ENCODE measurements at regions of chr1 and their contacts with region 1.

Region 1: GRCh38 chr1:218865591-218865990 is 308.1 kb upstream of the LYPLAL1 start:
- DNase-seq: no peak
- H3K4me3 ChIP-seq: no peak overlapping the region
- H3K4me3 Mint-ChIP-seq: no peak overlapping the region
- H3K27ac Mint-ChIP-seq: no peak overlapping the region
- H3K4me1 ChIP-seq: no peaks in the 10 kb centered on the region; the same call in 1 of the 2 replicates
- H3K4me1 Mint-ChIP-seq: peaks cover 7% of the 10 kb centered on the region
- H3K27me3 ChIP-seq: no peaks in the 10 kb centered on the region
- H3K27me3 Mint-ChIP-seq: no peaks in the 10 kb centered on the region
- CTCF ChIP-seq: no peak

Region 2: GRCh38 chr1:218789110-218789509 is 76.5 kb before region 1 on chr1:
- CTCF ChIA-PET with region 1: no interaction called
- POLR2A ChIA-PET with region 1: no interaction called
- intact Hi-C with region 1: no loop called
- DNase-seq: no peak
- H3K4me3 ChIP-seq: no peak overlapping the region
- H3K4me3 Mint-ChIP-seq: no peak overlapping the region
- H3K27ac Mint-ChIP-seq: no peak overlapping the region
- H3K4me1 ChIP-seq: peaks cover 5% of the 10 kb centered on the region; the same call in 1 of the 2 replicates
- H3K4me1 Mint-ChIP-seq: peaks cover 7% of the 10 kb centered on the region
- H3K27me3 ChIP-seq: no peaks in the 10 kb centered on the region
- H3K27me3 Mint-ChIP-seq: no peaks in the 10 kb centered on the region
- CTCF ChIP-seq: no peak

Region 3: GRCh38 chr1:218900615-218901014 is 35.0 kb after region 1 on chr1:
- CTCF ChIA-PET with region 1: no interaction called
- POLR2A ChIA-PET with region 1: no interaction called
- intact Hi-C with region 1: no loop called
- DNase-seq: no peak
- H3K4me3 ChIP-seq: no peak overlapping the region
- H3K4me3 Mint-ChIP-seq: no peak overlapping the region
- H3K27ac Mint-ChIP-seq: no peak overlapping the region
- H3K4me1 ChIP-seq: no peaks in the 10 kb centered on the region
- H3K4me1 Mint-ChIP-seq: no peaks in the 10 kb centered on the region
- H3K27me3 ChIP-seq: no peaks in the 10 kb centered on the region; the same call in 1 of the 2 replicates
- H3K27me3 Mint-ChIP-seq: peaks cover 4% of the 10 kb centered on the region
- CTCF ChIP-seq: no peak

Region 4: DNA sequence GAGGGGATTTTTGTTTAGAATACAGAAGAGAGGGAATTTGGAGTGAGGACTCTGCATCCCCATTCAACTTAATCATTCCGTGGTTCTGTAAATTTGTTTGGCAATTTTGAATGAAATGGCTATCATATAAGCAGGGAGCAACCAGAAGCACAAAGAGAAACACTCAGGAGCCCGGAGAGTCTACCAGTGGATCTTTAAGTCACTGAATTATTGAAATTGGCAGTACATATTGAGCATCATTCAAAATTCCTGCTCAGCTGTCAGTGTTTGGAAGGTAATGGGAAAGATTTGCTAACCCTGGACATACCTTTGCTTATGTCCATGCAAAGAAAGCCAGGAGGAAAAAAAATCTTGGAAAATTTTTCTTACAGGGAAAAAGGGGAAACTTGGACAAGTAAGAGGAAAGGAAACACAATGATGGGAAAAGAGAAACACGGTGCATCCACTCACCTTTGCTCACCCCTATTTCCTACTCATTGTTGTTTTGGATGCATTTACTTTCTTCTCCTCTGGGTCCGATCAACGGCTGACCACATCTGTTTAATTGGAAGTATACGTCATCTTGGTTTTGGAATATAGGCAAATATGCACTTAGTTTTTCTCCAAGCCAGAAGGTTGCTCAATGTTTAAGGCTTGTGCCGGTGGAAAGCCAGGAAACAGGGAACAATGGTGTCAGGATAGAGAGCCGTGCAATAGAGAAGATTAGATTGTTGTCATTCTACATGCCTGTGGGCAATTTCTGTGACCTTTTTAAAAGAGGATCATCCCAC is 65.1 kb after region 1 on chr1:
- CTCF ChIA-PET with region 1: no interaction called
- POLR2A ChIA-PET with region 1: no interaction called
- intact Hi-C with region 1: no loop called
- DNase-seq: no peak
- H3K4me3 ChIP-seq: no peak overlapping the region
- H3K4me3 Mint-ChIP-seq: no peak overlapping the region
- H3K27ac Mint-ChIP-seq: no peak overlapping the region
- H3K4me1 ChIP-seq: peaks cover 10% of the 10 kb centered on the region; the same call in 1 of the 2 replicates
- H3K4me1 Mint-ChIP-seq: no peaks in the 10 kb centered on the region
- H3K27me3 ChIP-seq: no peaks in the 10 kb centered on the region
- H3K27me3 Mint-ChIP-seq: no peaks in the 10 kb centered on the region
- CTCF ChIP-seq: no peak

Region 5: DNA sequence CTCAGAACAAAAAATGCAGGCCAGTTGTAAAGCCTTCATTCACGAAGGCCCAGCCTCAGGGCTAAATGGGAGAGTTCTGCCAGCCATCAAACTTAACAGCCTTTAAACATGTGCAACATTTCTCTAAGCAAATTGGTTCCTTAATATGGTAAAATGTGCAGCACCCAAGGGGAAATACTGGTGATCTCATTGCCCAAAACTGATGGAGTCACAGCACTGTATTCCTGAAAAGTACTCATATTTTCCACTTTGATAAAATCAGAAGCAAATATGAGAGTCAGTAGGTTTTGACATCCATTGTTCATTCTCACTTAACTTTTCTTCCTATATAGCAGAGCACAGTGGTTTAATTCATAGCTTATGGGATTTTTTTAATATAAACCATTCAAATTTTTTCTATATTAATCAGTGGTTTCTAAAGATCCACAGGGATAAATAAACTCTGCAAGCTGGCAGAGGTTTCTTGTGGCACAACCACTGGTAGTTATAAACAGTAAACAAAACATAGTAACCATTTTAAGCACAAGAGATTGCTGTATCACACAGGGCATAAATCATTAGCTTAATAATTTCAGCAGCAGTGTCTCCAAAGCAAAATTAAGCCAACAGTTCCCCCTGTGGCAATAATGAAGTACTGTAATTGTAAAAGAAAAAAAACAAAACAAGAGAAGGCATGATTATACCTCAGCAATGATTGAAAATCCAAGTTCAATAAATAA is 201.2 kb after region 1 on chr1:
- CTCF ChIA-PET with region 1: no interaction called
- POLR2A ChIA-PET with region 1: no interaction called
- intact Hi-C with region 1: loop called (anchors 10 kb)
- DNase-seq: no peak
- H3K4me3 ChIP-seq: no peak overlapping the region
- H3K4me3 Mint-ChIP-seq: no peak overlapping the region
- H3K27ac Mint-ChIP-seq: no peak overlapping the region
- H3K4me1 ChIP-seq: no peaks in the 10 kb centered on the region
- H3K4me1 Mint-ChIP-seq: no peaks in the 10 kb centered on the region
- H3K27me3 ChIP-seq: no peaks in the 10 kb centered on the region
- H3K27me3 Mint-ChIP-seq: no peaks in the 10 kb centered on the region
- CTCF ChIP-seq: peak; percentile 30 to 38

Measured in Caco-2 (cell line).